Caco-2 (cell line): ENCODE measurements at regions of chr3 and their contacts with region 1.

Region 1: DNA sequence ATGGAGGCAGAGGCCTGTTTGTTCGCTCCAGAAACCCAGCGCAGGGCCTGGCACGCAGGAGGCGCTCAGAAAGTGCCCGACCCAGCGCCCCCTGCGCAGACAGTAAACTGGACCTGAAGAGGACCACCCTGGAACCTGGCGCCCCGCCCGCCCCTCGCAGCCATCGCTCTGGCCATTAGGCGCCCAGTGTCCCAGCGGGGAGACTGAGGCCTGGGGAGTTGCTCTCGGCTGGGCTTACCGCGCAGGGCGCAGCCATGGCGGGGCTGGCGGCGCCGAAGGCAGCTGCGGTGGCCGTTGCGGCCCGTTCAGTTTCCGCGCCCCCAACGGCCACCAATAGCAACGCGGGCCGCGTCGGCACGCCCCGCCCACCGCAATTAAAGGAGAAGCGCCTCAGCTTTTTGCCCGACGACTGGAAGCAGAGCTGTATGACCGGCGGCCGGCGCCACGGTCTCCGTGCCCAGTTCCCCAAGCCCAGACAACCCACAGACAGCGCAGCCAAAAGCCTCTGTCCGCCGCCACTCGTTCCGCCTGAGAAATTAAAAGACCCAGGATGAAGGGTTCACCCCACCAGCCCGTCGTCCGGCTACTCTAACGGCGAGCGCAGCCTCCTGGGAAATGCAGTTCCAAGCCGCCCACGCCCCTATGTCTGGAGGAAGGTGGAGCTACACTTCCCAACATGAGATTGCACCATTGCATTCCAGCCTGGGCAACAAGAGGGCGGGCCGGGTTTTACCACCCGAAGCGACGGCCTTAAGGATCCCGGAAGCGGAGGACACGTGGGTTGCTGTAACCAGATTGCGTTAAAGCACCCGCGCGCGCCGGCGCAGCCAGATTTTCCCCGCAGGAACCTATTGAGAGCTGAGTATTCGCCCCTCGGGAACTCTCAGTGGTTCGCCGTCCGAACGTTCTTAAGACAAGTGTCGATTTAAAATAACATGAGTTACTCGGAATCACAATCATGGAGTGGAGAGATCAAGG is at the start of gene POC1A:
- DNase-seq: peak; percentile 92 to 95
- H3K4me3 ChIP-seq: peak within 1 kb of the TSS; percentile 88
- H3K4me3 Mint-ChIP-seq: peak within 1 kb of the TSS; percentile 95
- H3K27ac Mint-ChIP-seq: peak within 1 kb of the TSS; percentile 98
- H3K4me1 ChIP-seq: peaks cover 11% of the 10 kb centered on the region
- H3K4me1 Mint-ChIP-seq: no peaks in the 10 kb centered on the region
- H3K27me3 ChIP-seq: no peaks in the 10 kb centered on the region
- H3K27me3 Mint-ChIP-seq: no peaks in the 10 kb centered on the region
- CTCF ChIP-seq: no peak
- total RNA-seq, gene POC1A: 28.3 and 32.2 TPM in 2 replicates

Region 2: DNA sequence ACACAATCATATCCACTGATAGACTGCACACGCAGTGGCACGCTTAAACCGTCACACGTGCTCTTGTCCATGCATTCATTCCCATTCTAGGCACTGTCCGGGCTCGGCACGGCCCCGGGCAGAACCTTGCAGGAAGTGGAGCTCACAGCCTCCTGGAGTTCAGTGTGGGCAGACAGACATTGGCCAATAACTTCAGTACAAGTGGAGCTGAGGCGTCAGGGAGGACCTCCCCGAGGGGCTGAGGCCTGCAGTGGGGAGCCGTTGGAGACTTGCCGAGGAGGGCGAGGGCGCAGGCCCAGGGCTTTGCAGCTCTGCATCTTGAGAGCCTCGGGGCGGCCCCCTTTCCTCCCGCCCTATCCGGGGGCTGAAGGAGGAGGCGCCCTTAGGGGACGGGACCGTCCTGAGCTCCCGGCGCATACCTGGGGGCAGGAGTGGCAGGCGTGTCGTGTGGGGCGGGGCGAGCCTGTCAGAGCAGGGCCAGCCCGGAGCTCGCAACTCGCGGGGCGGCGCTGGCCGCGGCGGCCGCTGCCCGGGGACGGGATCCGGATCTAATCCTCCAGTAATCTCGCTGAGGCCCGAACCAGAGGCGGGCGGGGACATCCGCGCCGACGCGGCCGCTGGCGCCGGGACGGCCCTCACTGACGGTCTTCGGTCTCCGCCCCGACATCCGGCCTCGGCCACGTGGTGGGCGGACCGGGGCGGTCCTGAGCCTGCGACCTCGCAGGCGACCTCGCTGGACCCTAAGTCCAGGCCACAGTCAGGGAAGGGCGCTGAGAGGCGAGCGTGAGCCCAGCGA is 171.4 kb before region 1 on chr3 and contains the start of gene ACY1:
- CTCF ChIA-PET with region 1: interaction called, 10 read pairs
- POLR2A ChIA-PET with region 1: interaction called, 17 read pairs
- intact Hi-C with region 1: no loop called
- DNase-seq: peak; percentile 95 to 96
- H3K4me3 ChIP-seq: peak within 1 kb of the TSS; percentile 46
- H3K4me3 Mint-ChIP-seq: peak within 1 kb of the TSS; percentile 99
- H3K27ac Mint-ChIP-seq: peak within 1 kb of the TSS; percentile 86
- H3K4me1 ChIP-seq: peaks cover 46% of the 10 kb centered on the region
- H3K4me1 Mint-ChIP-seq: peaks cover 15% of the 10 kb centered on the region
- H3K27me3 ChIP-seq: no peaks in the 10 kb centered on the region
- H3K27me3 Mint-ChIP-seq: no peaks in the 10 kb centered on the region
- CTCF ChIP-seq: peak in 1 of 2 experiments; percentile 0
- total RNA-seq, gene ACY1: 62.4 and 67.9 TPM in 2 replicates

Region 3: GRCh38 chr3:52056968-52057805 is 97.2 kb before region 1 on chr3:
- CTCF ChIA-PET with region 1: interaction called, 5 read pairs
- POLR2A ChIA-PET with region 1: interaction called, 12 read pairs
- intact Hi-C with region 1: loop called (anchors 2 kb)
- DNase-seq: peak; percentile 98 to 99
- H3K4me3 ChIP-seq: peak overlapping the region; percentile 82
- H3K4me3 Mint-ChIP-seq: peak overlapping the region; percentile 89
- H3K27ac Mint-ChIP-seq: peak overlapping the region; percentile 89
- H3K4me1 ChIP-seq: peaks cover 4% of the 10 kb centered on the region; the same call in 1 of the 2 replicates
- H3K4me1 Mint-ChIP-seq: no peaks in the 10 kb centered on the region
- H3K27me3 ChIP-seq: no peaks in the 10 kb centered on the region
- H3K27me3 Mint-ChIP-seq: no peaks in the 10 kb centered on the region
- CTCF ChIP-seq: peak in 1 of 2 experiments; percentile 21

Region 4: DNA sequence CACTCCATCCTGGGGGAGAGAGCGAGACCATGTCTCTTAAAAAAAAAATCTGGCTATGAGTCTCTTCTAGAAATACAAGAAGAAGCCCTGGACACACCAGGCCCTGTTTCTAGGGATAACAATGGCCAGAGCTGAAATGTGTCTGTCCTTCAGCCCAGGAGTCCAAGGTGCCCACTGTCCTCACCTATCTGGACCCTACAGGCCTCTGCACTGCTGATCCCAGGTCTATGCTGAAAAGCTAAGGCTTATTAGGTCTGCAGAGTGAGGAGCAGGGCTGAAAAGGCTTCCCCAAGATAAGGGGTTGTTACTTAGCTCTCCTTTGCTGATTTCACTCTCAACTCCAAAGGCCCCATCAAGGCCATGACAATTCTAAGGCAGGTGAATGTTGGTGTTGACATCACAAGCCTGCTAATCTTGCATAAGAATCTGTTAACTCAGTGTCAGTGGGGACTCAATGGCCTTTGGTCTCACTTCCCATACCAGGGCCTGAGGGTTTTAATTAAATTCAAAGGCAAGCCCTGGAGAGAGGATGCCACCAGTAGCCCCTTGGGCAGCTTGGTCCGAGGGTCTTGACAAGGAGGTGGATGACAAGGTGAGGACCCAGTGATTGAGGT is 34.0 kb after region 1 on chr3:
- CTCF ChIA-PET with region 1: interaction called, 12 read pairs
- POLR2A ChIA-PET with region 1: interaction called, 11 read pairs
- intact Hi-C with region 1: no loop called
- DNase-seq: no peak
- H3K4me3 ChIP-seq: no peak overlapping the region
- H3K4me3 Mint-ChIP-seq: no peak overlapping the region
- H3K27ac Mint-ChIP-seq: peak overlapping the region; percentile 26
- H3K4me1 ChIP-seq: peaks cover 18% of the 10 kb centered on the region
- H3K4me1 Mint-ChIP-seq: peaks cover 6% of the 10 kb centered on the region
- H3K27me3 ChIP-seq: no peaks in the 10 kb centered on the region
- H3K27me3 Mint-ChIP-seq: no peaks in the 10 kb centered on the region
- CTCF ChIP-seq: no peak

Region 5: GRCh38 chr3:52210550-52211046 is 56.2 kb after region 1 on chr3:
- CTCF ChIA-PET with region 1: interaction called, 3 read pairs
- POLR2A ChIA-PET with region 1: no interaction called
- intact Hi-C with region 1: loop called (anchors 5 kb)
- DNase-seq: peak; percentile 68 to 78
- H3K4me3 ChIP-seq: no peak overlapping the region
- H3K4me3 Mint-ChIP-seq: no peak overlapping the region
- H3K27ac Mint-ChIP-seq: peak overlapping the region; percentile 55
- H3K4me1 ChIP-seq: peaks cover 13% of the 10 kb centered on the region
- H3K4me1 Mint-ChIP-seq: peaks cover 9% of the 10 kb centered on the region
- H3K27me3 ChIP-seq: no peaks in the 10 kb centered on the region
- H3K27me3 Mint-ChIP-seq: no peaks in the 10 kb centered on the region
- CTCF ChIP-seq: no peak